H1 (cell line): ENCODE measurements at regions of chr13 and their contacts with region 1.

Region 1: GRCh38 chr13:76038920-76039716 is 403.0 kb downstream of the LMO7 start:
- DNase-seq: no peak
- H3K4me3 ChIP-seq: no peak overlapping the region
- H3K27ac ChIP-seq: no peak overlapping the region
- H3K4me1 ChIP-seq: no peaks in the 10 kb centered on the region
- H3K27me3 ChIP-seq: no peaks in the 10 kb centered on the region
- CTCF ChIP-seq: peak; percentile 38 to 64 (median 63)
- EP300 ChIP-seq: no peak
- POLR2A ChIP-seq: no peak
- RAD21 ChIP-seq: peak; percentile 71 to 80

Region 2: DNA sequence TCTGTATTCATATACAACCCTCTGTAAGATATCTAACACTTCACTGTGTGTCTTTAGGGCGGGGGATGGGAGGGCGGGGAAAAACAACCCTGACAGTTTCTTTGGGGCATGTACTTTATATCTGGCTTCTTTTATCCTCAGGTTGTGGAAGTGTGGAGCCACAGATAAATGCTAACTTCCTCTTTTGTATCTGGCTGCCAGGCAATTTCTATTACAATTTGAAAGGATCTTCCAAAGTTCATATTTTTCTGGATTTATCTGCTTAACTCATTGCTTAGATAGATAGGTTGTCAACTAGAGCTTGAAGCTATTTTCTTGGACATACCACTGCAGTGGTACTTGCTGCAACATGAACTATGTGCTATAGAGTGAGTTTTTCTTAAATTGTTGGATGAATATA is 10.0 kb before region 1 on chr13:
- CTCF ChIA-PET with region 1: interaction called, 12 read pairs
- POLR2A ChIA-PET with region 1: no interaction called
- DNase-seq: no peak
- H3K4me3 ChIP-seq: no peak overlapping the region
- H3K27ac ChIP-seq: no peak overlapping the region
- H3K4me1 ChIP-seq: no peaks in the 10 kb centered on the region
- H3K27me3 ChIP-seq: no peaks in the 10 kb centered on the region
- CTCF ChIP-seq: no peak
- EP300 ChIP-seq: no peak
- POLR2A ChIP-seq: no peak
- RAD21 ChIP-seq: no peak

Region 3: GRCh38 chr13:76473552-76474134 is 434.5 kb after region 1 on chr13:
- CTCF ChIA-PET with region 1: interaction called, 46 read pairs
- POLR2A ChIA-PET with region 1: no interaction called
- DNase-seq: peak; percentile 51 to 81
- H3K4me3 ChIP-seq: no peak overlapping the region
- H3K27ac ChIP-seq: no peak overlapping the region
- H3K4me1 ChIP-seq: no peaks in the 10 kb centered on the region
- H3K27me3 ChIP-seq: no peaks in the 10 kb centered on the region
- CTCF ChIP-seq: peak; percentile 37 to 99 (median 82)
- EP300 ChIP-seq: no peak
- POLR2A ChIP-seq: no peak
- RAD21 ChIP-seq: peak; percentile 97 to 99